Activated naive CD4-positive, alpha-beta T cell treated with anti-CD3 and anti-CD28 coated beads for 36 hours (primary cell): ENCODE measurements at regions of chr15 and their contacts with region 1.

Region 1: GRCh38 chr15:81939604-81940440 is 106.0 kb downstream of the MEX3B start:
- DNase-seq: peak; percentile 48
- H3K4me3 Mint-ChIP-seq: no peak overlapping the region
- H3K27ac Mint-ChIP-seq: no peak overlapping the region
- H3K4me1 Mint-ChIP-seq: no peaks in the 10 kb centered on the region
- H3K27me3 Mint-ChIP-seq: peaks cover 6% of the 10 kb centered on the region

Region 2: DNA sequence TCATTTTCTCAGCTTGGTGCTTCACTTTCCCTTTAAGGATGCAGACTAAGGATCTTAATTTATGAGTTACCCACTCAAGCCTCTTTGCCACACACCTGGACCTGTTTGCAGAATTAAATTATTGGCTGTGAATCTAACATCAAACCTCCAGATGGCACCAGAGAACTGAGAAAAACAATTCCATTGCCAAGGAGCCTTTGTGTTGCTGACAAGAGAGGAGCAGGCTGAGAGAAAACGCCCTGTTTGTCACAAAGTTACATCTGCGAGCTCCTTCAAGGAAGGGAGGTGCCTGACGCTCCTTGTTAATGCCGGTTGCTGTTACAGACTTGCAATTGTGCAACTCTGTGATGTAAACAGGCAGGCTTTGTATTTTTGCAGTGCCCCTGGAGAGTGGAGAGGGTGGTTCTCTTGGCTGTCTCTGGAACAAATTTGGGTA is 529.5 kb before region 1 on chr15:
- CTCF ChIA-PET with region 1: interaction called, 10 read pairs
- intact Hi-C with region 1: loop called (anchors 1 kb)
- DNase-seq: peak; percentile 31
- H3K4me3 Mint-ChIP-seq: no peak overlapping the region
- H3K27ac Mint-ChIP-seq: no peak overlapping the region
- H3K4me1 Mint-ChIP-seq: peaks cover 12% of the 10 kb centered on the region
- H3K27me3 Mint-ChIP-seq: peaks cover 14% of the 10 kb centered on the region

Region 3: DNA sequence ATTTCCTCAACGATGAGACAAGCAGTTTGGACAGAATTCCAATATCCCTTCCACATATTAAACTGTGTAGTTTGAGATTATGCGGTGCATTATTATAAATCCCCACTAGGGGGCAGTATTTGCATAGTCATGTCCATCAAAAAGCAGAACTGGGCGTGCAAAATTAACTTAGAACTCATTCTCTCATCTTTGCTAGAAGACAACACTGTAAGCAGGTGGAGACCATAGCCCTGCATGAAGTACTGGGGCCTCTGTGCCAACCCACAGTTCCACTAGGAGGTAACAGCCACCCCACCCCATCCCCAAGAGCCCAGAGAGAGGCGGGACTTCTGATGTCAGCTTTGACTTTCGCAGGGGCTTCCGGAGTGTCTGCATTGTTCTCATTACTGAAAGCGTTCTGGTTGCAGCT is 459.2 kb before region 1 on chr15:
- CTCF ChIA-PET with region 1: interaction called, 5 read pairs
- intact Hi-C with region 1: loop called (anchors 1 kb)
- DNase-seq: peak; percentile 8
- H3K4me3 Mint-ChIP-seq: no peak overlapping the region
- H3K27ac Mint-ChIP-seq: no peak overlapping the region
- H3K4me1 Mint-ChIP-seq: no peaks in the 10 kb centered on the region
- H3K27me3 Mint-ChIP-seq: peaks cover 2% of the 10 kb centered on the region